Posterior vena cava (tissue), 2 donors: ENCODE measurements at regions of chr14 and their contacts with region 1.

Region 1: DNA sequence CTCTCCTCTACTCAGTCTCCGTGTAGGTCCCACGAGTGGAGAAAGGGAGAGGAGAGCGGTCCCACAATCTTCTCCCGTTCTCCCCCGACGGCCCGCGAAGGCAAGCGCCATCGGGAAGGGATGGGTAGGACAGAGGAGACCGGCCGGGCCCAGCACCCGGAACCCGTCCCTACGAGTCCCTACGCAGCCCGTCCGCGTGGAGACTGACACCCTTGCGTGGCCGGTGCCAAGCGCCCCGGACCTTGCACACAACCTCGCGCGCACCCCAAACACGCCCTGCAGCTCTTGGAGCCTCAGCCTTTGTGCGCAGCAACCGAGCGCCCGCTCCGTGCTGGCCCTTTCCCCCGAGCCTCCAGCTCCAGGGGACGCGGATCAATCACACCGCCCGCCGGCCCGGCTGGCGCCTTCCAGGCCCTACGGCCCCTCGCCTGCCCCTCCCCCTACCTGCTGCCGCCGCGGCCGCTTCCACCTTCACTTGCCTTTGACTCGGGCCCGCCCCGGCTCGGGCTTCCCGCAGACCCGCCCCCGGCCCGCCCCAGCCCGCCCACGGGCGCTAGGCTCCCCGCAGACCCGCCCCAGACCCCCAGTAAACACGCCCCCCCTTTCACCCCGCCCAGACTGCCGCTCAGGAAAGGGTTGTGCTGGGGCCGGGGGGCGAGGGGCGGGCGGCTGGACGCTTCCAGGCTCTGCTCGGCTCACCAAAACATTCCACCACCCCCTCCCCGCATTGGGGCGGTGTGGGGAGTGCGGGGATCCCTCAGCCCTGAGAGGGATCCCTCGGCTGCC is at the start of gene NDRG2:
- DNase-seq: peak; percentile 87
- total RNA-seq, gene NDRG2: 78.0 to 80.7 TPM

Region 2: GRCh38 chr14:20922474-20922873 is 102.3 kb before region 1 on chr14:
- intact Hi-C with region 1: no loop called
- DNase-seq: no peak

Region 3: GRCh38 chr14:21081521-21082142 is 56.9 kb after region 1 on chr14:
- intact Hi-C with region 1: no loop called
- DNase-seq: no peak

Region 4: DNA sequence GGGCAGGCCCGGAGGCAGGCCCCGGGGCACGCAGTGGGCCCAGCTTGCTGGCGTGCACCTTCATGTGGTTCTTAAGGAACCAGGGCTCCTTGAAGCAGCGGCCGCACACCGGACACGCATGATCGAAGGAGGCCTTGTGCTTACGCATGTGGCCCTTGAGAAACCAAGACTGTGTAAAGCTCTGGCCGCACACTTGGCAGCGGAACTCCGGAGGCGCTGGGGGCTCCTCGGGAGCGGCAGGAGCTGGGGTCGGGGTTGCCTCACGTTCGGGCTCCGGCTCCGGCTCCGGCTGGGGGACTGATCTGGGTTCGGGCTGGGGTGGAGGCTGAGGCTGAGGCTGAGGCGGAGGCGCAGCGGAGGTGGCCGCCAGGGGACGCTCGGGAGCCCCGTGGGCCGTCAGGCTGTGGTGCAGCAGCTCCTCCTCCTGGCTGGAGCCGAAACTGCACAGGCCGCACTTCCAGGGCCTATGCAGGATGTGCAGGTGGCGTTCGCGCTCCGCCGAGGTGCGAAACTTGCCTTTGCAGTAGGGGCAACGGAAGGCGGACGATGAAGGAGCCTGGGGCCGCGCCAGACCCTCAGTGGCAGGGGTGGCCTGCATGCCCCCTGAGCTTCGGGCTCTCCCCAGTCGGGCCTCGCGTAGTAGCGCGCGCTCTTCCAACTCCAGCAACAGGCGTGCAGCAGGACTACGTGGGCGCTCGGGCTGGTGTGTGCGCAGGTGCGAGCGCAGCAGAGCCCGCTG is 67.7 kb after region 1 on chr14:
- intact Hi-C with region 1: loop called in 1 of 2 experiments (anchors 5 kb)
- DNase-seq: peak; percentile 97

Region 5: DNA sequence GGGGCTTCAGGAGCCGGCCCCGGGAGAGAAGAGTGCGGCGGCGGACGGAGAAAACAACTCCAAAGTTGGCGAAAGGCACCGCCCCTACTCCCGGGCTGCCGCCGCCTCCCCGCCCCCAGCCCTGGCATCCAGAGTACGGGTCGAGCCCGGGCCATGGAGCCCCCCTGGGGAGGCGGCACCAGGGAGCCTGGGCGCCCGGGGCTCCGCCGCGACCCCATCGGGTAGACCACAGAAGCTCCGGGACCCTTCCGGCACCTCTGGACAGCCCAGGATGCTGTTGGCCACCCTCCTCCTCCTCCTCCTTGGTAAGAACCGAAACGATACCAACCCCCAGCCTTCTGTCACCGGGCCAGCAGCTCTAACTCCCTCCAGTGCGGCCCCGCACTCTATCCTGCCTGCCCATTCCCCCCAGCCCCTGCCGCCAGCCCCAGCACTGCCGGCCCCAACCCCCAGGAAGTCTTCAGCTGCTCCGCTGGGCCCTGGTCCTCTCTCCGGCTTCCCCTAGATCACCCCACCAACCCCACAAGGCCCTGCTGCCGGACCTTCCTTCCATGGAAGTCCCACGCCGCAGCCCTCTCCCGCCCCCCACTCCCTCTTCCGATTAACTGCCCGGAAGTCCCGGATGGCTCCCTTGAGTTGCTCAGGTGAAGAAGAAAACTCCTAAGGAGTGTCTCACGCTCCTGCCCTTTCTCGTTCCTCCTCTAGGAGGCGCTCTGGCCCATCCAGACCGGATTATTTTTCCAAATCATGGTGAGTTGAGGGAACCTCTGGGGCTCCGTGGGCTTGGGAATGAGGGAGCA is 1847.5 kb after region 1 on chr14:
- intact Hi-C with region 1: no loop called
- DNase-seq: peak; percentile 93